ENCODE measurements at regions of chr12 and their contacts with region 1.

Region 1: GRCh38 chr12:69359531-69360347 is at the start of gene YEATS4:
- DNase-seq: peak; percentile 97
- H3K4me3 Mint-ChIP-seq: peak within 1 kb of the TSS; percentile 71
- H3K27ac Mint-ChIP-seq: peak within 1 kb of the TSS; percentile 89
- H3K4me1 Mint-ChIP-seq: peaks cover 33% of the 10 kb centered on the region
- H3K27me3 Mint-ChIP-seq: no peaks in the 10 kb centered on the region
- total RNA-seq, gene YEATS4: 52.3 to 53.5 TPM

Region 2: GRCh38 chr12:69239352-69239921 is 120.3 kb before region 1 on chr12 and contains the start of gene CPSF6:
- CTCF ChIA-PET with region 1: no interaction called
- intact Hi-C with region 1: loop called (anchors 1 kb)
- DNase-seq: peak; percentile 97
- H3K4me3 Mint-ChIP-seq: peak within 1 kb of the TSS; percentile 91
- H3K27ac Mint-ChIP-seq: peak within 1 kb of the TSS; percentile 98
- H3K4me1 Mint-ChIP-seq: peaks cover 47% of the 10 kb centered on the region
- H3K27me3 Mint-ChIP-seq: no peaks in the 10 kb centered on the region
- total RNA-seq, gene CPSF6: 73.7 to 75.7 TPM

Region 3: GRCh38 chr12:69348162-69348938 is 11.4 kb before region 1 on chr12 and contains the start of gene LYZ:
- CTCF ChIA-PET with region 1: interaction called, 12 read pairs
- intact Hi-C with region 1: no loop called
- DNase-seq: no peak
- H3K4me3 Mint-ChIP-seq: no peak within 1 kb of the TSS
- H3K27ac Mint-ChIP-seq: no peak within 1 kb of the TSS
- H3K4me1 Mint-ChIP-seq: peaks cover 4% of the 10 kb centered on the region
- H3K27me3 Mint-ChIP-seq: no peaks in the 10 kb centered on the region
- total RNA-seq, gene LYZ: not detected

Region 4: GRCh38 chr12:69570545-69571399 is 211.0 kb after region 1 on chr12:
- CTCF ChIA-PET with region 1: interaction called, 55 read pairs
- intact Hi-C with region 1: loop called (anchors 1 kb)
- DNase-seq: peak; percentile 75
- H3K4me3 Mint-ChIP-seq: no peak overlapping the region
- H3K27ac Mint-ChIP-seq: no peak overlapping the region
- H3K4me1 Mint-ChIP-seq: peaks cover 11% of the 10 kb centered on the region
- H3K27me3 Mint-ChIP-seq: no peaks in the 10 kb centered on the region

Region 5: DNA sequence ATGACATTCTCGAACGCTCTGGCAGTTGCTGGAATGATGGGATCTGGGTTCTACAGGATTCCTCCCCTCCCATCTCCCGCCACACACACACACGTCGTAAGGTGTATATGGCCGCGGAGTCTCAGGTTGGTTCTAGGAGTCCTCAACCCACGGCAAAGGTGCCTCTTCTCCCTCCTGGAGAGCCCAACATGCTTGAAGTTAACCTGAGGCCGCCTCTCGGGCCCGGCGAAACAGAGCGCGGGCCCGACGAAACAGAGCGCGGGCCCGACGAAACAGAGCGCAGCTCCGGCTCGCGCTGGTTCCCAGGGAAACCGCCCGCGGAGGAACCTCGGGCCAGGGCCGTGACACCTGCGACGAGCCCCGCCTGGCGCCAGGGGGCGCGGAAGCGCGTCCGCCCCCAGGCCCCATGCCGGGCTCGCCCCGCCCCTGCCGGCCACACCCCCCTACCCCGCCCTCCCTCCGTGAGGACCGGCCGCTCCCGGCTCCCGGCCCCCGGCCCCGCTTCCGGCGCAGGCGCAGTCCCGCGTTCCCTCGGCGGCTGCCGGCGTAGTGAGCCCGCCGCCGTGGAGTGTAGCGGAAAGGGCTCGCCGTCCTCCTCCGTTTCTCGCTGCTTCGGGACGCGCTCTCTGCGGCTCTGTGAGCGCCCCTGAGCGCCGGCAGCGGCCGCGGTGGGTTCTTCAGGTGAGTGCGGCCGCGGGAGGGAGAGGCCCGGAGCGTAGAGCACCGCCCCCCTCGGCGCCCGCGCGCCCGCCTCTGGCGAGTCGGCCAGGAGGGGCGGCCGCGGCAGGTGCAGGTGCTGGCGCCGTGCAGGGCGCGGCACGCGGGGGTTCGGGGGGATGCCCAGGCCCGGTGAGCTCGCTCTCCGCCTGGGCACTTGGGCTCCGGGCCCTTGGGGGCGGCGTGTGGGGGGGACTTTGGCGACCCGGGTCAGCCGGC is 378.9 kb after region 1 on chr12 and contains the start of gene RAB3IP:
- CTCF ChIA-PET with region 1: interaction called, 3 read pairs
- intact Hi-C with region 1: loop called (anchors 1 kb)
- DNase-seq: peak; percentile 94
- H3K4me3 Mint-ChIP-seq: peak within 1 kb of the TSS; percentile 77
- H3K27ac Mint-ChIP-seq: peak within 1 kb of the TSS; percentile 75
- H3K4me1 Mint-ChIP-seq: peaks cover 18% of the 10 kb centered on the region
- H3K27me3 Mint-ChIP-seq: no peaks in the 10 kb centered on the region
- total RNA-seq, gene RAB3IP: 23.0 to 25.4 TPM

Region 6: DNA sequence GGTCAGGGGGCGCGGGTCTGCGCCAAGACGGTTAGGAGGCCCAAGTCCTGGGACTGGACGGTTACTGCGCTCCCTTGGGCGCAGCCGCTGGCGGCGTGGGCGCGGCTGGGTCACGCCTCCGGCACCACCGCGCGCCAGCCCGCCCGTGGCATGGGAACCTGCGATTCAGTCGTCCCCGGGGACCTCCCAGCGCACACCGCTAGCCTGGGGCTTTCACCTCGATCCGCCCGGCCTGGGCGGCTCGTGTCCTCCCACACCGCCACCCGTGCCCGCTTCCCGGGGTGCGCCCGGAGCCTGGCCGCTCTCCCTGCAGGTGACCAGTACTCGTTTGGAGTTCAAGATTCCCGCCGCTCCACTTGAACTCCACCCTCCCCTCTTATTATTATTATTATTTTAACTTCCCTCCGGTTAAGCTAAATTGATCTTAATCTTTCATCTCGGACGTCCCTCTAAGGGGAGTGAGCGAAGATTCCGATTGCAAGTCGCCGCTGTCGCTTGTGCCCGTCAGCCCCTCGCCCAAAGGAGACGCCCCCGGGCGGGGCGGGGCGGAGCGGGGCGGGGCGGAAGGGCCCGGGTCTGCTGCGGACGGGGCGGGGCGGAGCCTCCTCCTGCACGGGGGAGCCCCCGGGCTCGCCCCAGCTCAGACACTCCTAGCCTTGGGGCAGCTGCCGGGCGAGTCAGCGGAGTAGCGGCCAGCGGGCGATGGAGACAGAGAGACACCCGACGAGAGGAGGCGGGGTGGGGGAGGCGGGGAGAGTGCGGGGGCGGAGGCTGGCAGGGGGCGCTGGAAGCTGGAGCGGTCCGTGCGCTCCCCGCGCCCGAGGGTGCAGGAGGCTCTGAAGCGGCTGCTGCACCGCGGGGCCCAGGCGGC is 1006.1 kb after region 1 on chr12 and contains the start of gene KCNMB4:
- CTCF ChIA-PET with region 1: no interaction called
- intact Hi-C with region 1: loop called (anchors 1 kb)
- DNase-seq: peak; percentile 75
- H3K4me3 Mint-ChIP-seq: peak within 1 kb of the TSS; percentile 90
- H3K27ac Mint-ChIP-seq: no peak within 1 kb of the TSS
- H3K4me1 Mint-ChIP-seq: peaks cover 18% of the 10 kb centered on the region
- H3K27me3 Mint-ChIP-seq: peaks cover 10% of the 10 kb centered on the region
- total RNA-seq, gene KCNMB4: 0.54 to 0.60 TPM

Measured in activated naive CD4-positive, alpha-beta T cell treated with anti-CD3 and anti-CD28 coated beads for 36 hours (primary cell).